Motor neuron (in vitro differentiated cells): ENCODE measurements at regions of chr10 and their contacts with region 1.

Region 1: DNA sequence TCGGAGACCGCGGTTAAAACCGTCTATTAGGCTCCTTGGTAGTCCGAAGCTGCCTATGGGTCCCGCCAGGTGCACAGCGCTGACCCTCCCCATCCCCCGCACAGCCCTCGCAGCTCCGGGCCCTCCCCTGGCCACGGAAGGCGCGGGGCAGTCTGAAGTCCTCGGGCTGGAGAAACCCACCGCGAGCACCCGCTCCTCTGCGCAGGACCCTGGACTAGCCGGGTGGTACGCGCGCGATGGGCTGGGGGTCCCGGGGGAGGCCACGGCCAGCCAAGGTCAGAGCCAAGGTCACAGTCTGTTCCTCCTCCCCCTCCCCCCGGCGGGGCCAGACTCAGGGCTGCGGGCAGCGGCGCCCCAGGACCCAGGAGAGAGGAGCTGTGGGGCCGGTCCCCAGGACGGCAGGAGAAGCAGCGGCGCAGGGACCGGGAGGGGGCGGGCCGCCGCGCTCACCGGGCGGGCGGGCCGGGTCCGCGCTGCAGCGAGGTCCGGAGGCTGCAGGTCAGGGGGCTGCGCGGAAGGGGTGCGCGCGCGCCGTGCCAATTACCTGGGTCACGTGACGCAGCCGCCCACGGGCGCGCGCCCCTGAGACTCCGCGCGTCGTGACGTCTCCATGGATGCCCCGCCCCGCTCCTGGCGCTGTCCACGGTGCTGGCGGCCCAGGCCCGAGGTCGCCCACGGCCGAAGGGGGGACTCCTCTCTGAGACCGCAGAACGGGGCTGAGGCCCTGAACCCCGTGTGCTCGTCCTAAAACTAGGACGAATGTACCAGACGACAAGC is at the start of gene OGDHL:
- ATAC-seq: peak; percentile 87 to 93 (median 93)
- H3K4me3 ChIP-seq: peak within 1 kb of the TSS; percentile 43 to 52 (median 50)
- H3K27ac ChIP-seq: peak within 1 kb of the TSS; percentile 43 to 46
- H3K4me1 ChIP-seq: peaks cover 0 to 17% of the 10 kb centered on the region in 2 donors
- total RNA-seq, gene OGDHL: 1.9 to 47.1 (median 11.9) TPM

Region 2: GRCh38 chr10:49109669-49110340 is 652.2 kb before region 1 on chr10:
- in situ Hi-C with region 1: no loop called
- ATAC-seq: peak in 7 of 8 experiments; percentile 15 to 98 (median 51)
- H3K4me3 ChIP-seq: no peak overlapping the region
- H3K27ac ChIP-seq: no peak overlapping the region
- H3K4me1 ChIP-seq: peaks cover 3 to 7% of the 10 kb centered on the region in 2 donors

Region 3: DNA sequence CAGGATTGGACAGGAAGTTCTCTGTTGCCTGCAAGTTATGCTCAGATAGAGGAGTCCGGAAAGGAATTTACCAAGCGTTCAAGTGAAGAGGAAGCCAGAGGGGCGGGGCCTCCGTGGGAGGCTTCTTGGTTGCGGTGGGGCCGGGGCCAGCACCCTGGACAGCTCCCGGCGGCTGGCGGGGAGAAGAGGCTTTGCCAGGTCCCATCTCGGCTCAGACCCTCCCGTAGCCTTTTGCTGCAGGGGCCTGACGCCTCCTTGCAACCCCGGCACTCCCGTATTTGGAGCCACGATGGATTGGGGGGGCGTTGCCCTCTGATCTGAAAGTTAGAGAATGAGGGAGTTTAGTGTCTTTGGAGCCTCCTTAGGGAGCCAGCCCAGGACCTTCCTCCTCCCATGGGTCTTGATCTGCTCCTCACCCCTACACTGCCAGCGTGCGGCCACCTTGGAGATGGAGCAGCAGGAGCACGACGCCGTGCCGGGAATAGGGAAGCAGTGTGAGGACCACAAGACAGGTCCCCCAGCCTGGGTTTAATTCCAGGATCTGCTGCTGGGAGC is 154.9 kb before region 1 on chr10:
- in situ Hi-C with region 1: loop called in 1 of 9 experiments (anchors 25 kb)
- ATAC-seq: peak in 3 of 8 experiments; percentile 57 to 79 (median 65)
- H3K4me3 ChIP-seq: peak overlapping the region in 2 of 5 donors; percentile 7 to 15
- H3K27ac ChIP-seq: no peak overlapping the region
- H3K4me1 ChIP-seq: peaks cover 32 to 49% of the 10 kb centered on the region in 2 donors

Region 4: DNA sequence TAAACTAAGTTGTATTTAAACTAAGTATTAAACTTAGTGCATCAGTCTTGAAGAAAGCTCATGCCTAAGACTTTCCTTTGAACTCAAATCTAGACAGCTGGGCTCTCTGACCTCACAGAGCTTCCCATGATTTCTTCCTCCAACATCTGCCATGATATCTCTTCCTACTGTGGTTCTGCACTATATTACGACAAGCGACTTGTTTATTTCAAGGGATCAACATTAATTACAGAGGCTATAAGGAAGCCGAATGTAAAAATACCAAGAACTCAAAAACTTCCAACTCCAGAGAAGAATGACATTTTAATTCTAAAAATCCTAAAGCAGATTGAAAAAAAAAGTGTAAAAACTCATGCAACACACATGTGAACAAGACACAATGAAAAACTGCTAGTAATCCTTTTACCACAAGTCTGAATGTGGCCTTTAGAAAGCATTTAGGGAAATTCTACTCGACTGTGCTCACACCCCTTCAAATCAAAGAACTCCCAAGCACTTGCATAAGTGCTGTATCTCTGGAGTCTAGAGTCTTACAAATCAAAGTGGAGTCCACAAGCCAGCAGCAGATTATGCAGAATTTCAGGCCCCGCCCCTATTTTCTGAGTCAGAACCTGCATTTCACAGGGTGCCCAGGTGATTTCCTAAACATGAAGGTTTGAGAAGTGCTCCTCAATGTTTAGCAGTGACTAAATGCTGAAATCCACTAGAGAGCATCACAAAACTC is 283.1 kb after region 1 on chr10:
- in situ Hi-C with region 1: no loop called
- ATAC-seq: peak in 3 of 8 experiments; percentile 63 to 99 (median 98)
- H3K4me3 ChIP-seq: no peak overlapping the region
- H3K27ac ChIP-seq: no peak overlapping the region
- H3K4me1 ChIP-seq: no peaks in the 10 kb centered on the region